Activated T-helper 2 cell treated with anti-CD3 and anti-CD28 coated beads, Interferon-gamma antibody, Interleukin-2, Interleukin-4, amounts not matched to agents 10 μg/mL and 5 μg/mL and 100 μg/mL, durations not matched to agents 14 hours and 24 hours and 36 hours (primary cell): ENCODE measurements at regions of chr12 and their contacts with region 1.

Region 1: DNA sequence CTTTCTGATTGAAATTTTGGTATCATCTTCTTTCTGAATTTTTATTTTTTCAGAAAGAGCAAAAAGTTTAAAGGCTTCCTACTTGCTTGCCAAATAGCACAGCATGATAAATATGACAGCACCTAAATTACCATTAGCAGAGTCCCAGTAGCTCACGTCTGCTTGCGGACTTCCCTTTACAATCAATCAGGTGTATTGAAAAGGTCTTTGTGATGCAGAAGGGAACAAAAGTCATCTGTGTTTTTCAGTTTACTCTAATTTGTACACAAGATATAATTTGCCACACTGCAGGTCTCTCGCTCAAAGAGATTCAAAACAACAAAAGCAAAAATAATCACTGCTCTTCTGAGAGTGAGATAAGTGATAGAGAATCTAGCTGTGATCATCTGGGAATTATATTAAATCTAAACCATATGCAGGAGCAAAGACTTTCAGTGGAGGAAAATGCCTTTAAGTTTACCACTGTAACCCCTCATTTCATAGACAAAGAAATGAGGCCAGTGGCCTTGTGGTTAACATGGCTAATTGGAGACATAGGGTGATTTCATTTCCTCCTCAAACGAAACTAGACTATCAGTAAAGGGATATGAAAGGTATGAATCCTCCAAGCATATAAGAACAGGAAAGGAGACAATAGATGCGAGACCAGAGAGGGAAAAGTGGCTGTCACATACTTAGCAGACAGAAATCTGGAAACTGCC is 240.8 kb upstream of the TMPO start:
- DNase-seq: no peak
- H3K4me3 Mint-ChIP-seq: no peak overlapping the region
- H3K27ac Mint-ChIP-seq: no peak overlapping the region
- H3K4me1 Mint-ChIP-seq: peaks cover 3% of the 10 kb centered on the region
- H3K27me3 Mint-ChIP-seq: peaks cover 1% of the 10 kb centered on the region

Region 2: DNA sequence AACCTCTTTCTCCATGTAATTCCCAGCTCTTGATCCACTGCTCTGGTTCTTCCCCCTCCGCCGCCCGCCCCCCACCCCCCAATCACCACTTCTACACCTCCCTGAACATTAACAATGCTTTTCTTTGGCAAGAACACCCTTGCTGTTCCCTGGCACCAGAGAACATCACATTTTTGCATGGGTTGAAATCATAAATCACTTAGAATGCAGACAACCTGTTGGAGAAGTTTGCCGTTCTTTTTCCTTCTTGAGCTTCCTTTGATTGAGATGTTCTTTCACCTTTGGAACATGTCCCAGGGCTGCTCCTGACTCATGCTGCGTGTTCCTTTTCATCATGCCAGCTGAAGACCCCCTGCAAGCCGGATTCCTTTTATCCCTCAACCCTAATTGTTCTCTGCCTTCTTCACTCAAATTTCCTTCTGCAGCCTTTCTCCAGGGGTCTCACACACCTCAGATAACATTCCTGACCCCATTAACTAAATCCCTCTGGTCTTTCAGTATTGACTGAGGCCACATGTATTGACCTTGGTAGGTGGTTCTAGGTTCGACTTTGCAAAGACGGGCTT is 53.3 kb before region 1 on chr12:
- intact Hi-C with region 1: loop called (anchors 2 kb)
- DNase-seq: no peak
- H3K4me3 Mint-ChIP-seq: no peak overlapping the region
- H3K27ac Mint-ChIP-seq: no peak overlapping the region
- H3K4me1 Mint-ChIP-seq: no peaks in the 10 kb centered on the region
- H3K27me3 Mint-ChIP-seq: no peaks in the 10 kb centered on the region